Motor neuron (in vitro differentiated cells): ENCODE measurements at regions of chr6 and their contacts with region 1.

Region 1: DNA sequence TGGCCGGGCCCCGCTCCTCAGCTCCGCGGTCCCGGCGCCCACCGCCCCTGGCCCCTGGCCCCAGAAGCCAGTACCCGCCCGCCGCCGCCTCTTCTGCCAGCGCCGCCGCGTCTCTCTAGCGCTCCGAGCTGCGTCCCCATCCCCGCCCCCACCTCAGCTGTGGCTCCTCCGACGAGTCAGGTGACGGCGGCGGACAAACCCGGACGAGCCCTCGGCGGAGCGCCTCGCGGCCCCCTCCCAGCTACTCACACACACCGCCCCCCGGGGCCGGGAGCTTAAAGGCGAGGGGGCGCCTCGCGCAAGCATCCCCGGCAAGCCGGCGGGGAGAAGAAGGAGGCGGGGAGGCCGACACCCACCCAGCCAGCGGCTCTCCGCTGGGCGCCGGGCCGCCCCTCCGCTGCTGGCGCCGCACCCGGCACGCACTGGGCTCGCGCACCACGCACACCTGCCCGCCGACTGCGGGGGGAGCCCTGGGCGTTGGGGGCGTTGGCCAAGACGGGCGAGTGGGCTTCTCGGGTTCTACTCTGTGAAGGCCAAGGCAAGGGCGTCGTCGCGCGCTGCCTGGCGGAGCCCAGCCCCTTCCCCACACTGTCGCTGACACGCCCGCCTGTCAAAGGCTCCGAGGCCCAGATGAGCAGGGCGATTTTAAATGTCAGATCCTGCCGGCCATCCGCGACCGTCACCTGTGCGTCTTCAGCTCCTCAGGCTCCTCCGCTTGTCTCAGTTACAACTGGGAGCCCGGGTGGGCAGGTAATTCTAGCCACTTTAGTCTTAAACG is at the start of gene SNAP91:
- ATAC-seq: peak; percentile 75 to 92 (median 90)
- H3K4me3 ChIP-seq: peak within 1 kb of the TSS; percentile 66 to 95 (median 72)
- H3K27ac ChIP-seq: peak within 1 kb of the TSS; percentile 87 to 88
- H3K4me1 ChIP-seq: peaks cover 0 to 12% of the 10 kb centered on the region in 2 donors
- total RNA-seq, gene SNAP91: 0.52 to 52.8 (median 39.3) TPM in 7 of 8 experiments, not detected in the other

Region 2: GRCh38 chr6:83847179-83847578 is 138.0 kb after region 1 on chr6:
- in situ Hi-C with region 1: loop called in 2 of 9 experiments (anchors 25 kb)
- ATAC-seq: no peak
- H3K4me3 ChIP-seq: no peak overlapping the region
- H3K27ac ChIP-seq: no peak overlapping the region
- H3K4me1 ChIP-seq: peaks cover 0 to under 1% of the 10 kb centered on the region in 2 donors

Region 3: GRCh38 chr6:83859410-83860358 is 150.5 kb after region 1 on chr6 and contains the start of gene CYB5R4:
- in situ Hi-C with region 1: loop called in 1 of 9 experiments (anchors 25 kb)
- ATAC-seq: peak; percentile 93 to 99 (median 97)
- H3K4me3 ChIP-seq: peak within 1 kb of the TSS; percentile 72 to 96 (median 74)
- H3K27ac ChIP-seq: peak within 1 kb of the TSS in 1 of 2 donors; percentile 68
- H3K4me1 ChIP-seq: peaks cover 5 to 14% of the 10 kb centered on the region in 2 donors
- total RNA-seq, gene CYB5R4: 2.3 to 15.2 (median 6.3) TPM